PC-3 (cell line): ENCODE measurements at regions of chr1 and their contacts with region 1.

Region 1: DNA sequence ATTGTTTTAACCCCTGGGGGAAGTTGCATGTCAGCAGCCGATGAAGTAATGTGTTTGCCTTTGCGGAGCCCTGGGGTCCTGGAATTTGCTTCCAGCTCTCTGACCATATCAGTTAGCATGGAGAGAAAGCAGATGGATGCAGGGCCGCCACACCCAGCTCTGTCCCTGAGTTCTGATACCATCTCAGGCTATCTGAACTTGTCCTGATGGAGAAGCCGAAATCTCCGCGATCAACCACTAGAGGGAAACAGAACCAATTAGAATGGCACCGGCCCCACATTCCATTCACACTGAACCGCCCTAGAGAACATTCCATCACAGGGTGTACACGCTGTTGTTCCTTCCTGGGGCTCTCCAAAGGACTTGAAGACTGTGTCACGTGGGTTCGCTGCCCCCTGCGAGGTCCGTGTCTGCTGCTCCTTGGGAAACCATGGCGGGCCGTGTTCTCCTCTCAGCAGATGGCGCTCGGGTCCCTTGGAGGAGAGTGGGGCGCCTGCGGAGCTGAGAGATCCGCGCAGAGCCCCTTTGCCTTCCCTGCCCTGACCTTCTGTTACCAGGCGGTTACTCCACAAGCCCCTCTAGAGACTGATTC is 75.4 kb downstream of the ABCA4 start:
- DNase-seq: peak; percentile 94
- ATAC-seq: peak; percentile 88
- H3K4me3 ChIP-seq: no peak overlapping the region
- H3K27ac ChIP-seq: no peak overlapping the region
- H3K4me1 ChIP-seq: peaks cover 29% of the 10 kb centered on the region
- H3K27me3 ChIP-seq: no peaks in the 10 kb centered on the region
- CTCF ChIP-seq: peak; percentile 88

Region 2: DNA sequence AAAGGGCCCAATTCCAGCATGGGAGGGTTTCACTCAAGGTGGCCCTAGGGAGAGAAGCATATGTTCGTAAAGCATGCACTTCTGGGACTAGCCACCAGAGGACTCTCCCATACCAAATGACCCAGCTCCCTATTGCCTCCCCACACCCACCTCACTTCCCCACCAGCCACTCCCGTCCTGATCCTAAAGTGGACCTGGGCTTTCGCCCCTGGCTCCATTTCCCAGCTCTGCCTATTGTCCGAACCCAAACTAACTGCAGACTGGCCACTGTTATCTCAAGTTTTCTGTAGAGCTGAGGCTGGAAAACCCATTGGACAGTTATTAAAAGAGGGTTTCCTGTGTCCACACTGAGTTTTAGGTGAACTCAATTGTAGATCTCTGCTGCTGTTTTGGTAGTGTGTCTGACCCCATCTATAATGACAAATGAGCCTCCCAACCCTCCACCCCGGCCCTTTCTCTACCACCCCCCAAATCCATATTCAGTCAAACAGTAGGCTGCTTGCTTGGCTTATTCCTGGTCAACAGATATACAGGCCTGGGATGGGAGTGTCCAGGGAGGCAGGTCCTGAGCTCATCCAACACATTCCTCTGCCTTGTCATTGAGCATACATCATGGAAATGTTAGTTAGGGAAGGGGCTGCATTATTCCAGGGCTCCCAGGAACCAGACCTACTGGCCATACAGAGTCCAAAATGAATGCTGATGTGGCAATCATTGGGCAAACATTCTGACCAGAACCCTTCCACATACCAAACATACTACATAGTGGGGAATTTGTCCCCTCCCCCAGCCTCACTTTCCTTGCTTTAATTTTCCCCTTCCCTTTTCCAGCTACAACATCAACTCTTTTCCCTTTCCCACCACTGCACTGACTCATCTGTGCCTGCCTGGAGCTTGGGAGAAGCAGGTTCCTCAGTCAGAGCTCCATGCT is 16.2 kb after region 1 on chr1:
- CTCF ChIA-PET with region 1: interaction called, 11 read pairs
- POLR2A ChIA-PET with region 1: no interaction called
- intact Hi-C with region 1: no loop called
- DNase-seq: peak; percentile 77
- ATAC-seq: peak; percentile 89
- H3K4me3 ChIP-seq: no peak overlapping the region
- H3K27ac ChIP-seq: peak overlapping the region; percentile 42
- H3K4me1 ChIP-seq: peaks cover 37% of the 10 kb centered on the region
- H3K27me3 ChIP-seq: no peaks in the 10 kb centered on the region
- CTCF ChIP-seq: peak; percentile 92

Region 3: DNA sequence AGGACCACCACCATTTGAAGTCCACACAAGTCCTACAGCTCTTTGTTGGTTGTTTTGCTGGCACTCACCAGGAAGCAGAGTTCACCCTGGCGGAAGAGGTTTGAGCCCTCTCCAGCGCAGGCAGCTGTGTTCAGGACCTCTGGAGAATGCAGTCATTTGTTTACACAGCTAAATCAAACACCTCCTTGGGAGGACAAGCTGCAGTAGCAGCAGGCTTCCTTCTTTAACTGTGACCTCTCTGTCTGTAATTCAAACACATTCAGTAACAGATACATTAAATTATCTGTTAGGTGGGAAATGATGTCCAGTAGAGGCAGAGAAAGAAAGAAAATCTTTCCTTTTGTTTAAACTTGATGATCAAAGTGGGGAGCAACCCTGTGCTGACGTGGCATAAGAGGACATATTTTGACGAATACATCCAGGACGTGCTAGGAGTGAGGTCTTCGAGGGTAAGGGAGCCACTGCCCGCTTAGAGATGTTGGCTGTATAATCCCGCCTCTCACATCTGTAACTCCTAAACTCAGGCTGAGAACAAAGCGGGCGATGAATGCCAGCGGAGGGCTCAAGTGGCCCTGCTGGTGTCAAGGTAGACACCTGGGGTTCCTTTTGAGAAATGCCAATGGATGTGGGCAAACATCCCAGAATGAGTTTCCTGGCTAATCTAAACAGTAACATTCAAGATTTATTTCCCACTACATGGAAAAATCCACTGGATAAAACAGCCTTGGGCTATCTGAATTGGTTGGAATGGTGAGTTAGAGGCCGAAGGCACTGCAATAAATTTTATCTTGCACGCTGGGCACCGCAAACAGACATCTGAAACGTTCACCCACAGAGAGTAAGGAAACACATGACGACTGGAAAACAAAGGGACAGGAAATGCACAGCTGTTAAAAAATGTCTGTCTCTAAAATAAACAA is 23.7 kb after region 1 on chr1:
- CTCF ChIA-PET with region 1: interaction called, 11 read pairs
- POLR2A ChIA-PET with region 1: interaction called, 3 read pairs
- intact Hi-C with region 1: loop called (anchors 2 kb)
- DNase-seq: peak; percentile 84
- ATAC-seq: peak; percentile 83
- H3K4me3 ChIP-seq: peak overlapping the region; percentile 27; the same call in 1 of the 2 replicates
- H3K27ac ChIP-seq: peak overlapping the region; percentile 80
- H3K4me1 ChIP-seq: peaks cover 45% of the 10 kb centered on the region
- H3K27me3 ChIP-seq: no peaks in the 10 kb centered on the region
- CTCF ChIP-seq: no peak

Region 4: DNA sequence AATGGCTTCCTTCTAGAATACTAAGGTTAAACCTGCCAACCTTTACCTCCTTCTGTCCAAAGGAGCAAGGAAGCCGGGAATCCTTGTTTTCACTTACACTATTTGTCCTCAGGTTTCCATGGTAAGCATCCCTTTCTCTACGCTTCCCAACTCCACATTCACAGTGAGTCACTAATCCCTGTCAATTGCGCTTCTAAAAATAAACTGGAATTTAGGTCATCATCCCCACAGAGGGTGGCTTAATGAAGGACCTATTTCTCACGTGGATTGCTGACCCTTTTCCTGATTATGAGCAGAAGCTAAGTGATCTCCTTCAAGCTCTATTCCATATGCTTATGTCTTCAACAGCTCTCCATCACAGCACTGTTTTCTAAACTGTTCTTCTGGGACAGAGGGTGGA is 115.2 kb after region 1 on chr1:
- CTCF ChIA-PET with region 1: no interaction called
- POLR2A ChIA-PET with region 1: no interaction called
- intact Hi-C with region 1: loop called (anchors 2 kb)
- DNase-seq: peak; percentile 50
- ATAC-seq: no peak
- H3K4me3 ChIP-seq: no peak overlapping the region
- H3K27ac ChIP-seq: no peak overlapping the region
- H3K4me1 ChIP-seq: no peaks in the 10 kb centered on the region
- H3K27me3 ChIP-seq: no peaks in the 10 kb centered on the region
- CTCF ChIP-seq: no peak

Region 5: DNA sequence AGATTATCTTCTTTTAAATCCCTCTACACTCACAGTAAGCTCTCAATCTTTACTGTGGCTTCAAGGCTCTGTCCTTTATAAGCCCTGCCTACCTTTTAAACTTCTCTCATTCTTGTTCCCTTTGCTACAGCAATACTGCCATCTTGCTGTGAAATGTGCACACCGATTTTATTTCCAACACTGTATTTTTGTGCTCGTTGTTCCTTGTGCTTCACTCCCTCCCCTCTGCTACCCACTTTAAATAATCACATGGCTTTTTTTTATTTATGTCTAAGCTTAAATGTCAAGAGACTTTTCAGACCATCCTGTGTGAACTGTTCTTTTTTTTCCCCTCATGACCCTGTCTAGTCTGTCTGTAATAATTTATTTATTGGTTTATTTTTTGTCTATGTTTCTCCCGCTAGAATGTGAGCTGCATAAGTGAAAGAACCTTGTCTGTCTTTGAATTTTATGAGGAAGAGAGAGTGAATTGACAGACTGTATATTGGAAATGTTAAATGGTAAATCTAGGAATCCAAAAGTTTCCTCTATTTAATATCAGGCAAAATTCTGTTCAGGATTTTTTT is 418.3 kb after region 1 on chr1:
- CTCF ChIA-PET with region 1: interaction called, 8 read pairs
- POLR2A ChIA-PET with region 1: no interaction called
- intact Hi-C with region 1: loop called (anchors 1 kb)
- DNase-seq: peak; percentile 78
- ATAC-seq: peak; percentile 99
- H3K4me3 ChIP-seq: no peak overlapping the region
- H3K27ac ChIP-seq: no peak overlapping the region
- H3K4me1 ChIP-seq: no peaks in the 10 kb centered on the region
- H3K27me3 ChIP-seq: no peaks in the 10 kb centered on the region
- CTCF ChIP-seq: peak; percentile 87